Cardiac septum (tissue), 1 donor: ENCODE measurements at regions of chr1 and their contacts with region 1.

Region 1: DNA sequence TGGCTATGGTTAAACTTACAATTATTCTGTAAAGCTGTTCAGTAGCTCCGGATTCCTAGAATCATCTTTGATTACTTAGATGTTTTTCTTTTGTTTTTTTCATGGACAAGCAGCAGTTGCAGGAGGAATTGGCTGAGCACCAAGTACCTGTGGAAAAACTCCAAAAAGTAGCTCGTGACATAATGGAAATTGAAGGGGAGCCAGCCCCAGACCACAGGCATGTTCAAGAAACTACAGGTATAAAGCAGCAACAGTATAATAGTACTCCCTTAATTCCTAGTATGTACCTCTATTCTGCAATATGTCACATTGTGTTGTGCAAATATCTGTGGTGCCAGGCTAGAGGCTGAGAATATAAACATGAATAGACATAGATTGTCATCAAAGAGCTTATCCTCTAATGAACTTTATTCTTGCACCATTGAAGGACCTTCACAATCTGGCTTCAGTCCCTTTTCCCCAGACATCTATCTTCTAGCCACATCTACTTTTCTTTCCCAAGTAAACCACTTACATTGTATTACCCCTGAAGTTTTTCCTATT is 132.3 kb upstream of the BMP8A start:
- DNase-seq: no peak

Region 2: GRCh38 chr1:38990738-38991639 is 368.1 kb before region 1 on chr1 and contains the start of gene AKIRIN1:
- intact Hi-C with region 1: no loop called
- DNase-seq: peak; percentile 100
- total RNA-seq, gene AKIRIN1: 60.0 TPM

Region 3: DNA sequence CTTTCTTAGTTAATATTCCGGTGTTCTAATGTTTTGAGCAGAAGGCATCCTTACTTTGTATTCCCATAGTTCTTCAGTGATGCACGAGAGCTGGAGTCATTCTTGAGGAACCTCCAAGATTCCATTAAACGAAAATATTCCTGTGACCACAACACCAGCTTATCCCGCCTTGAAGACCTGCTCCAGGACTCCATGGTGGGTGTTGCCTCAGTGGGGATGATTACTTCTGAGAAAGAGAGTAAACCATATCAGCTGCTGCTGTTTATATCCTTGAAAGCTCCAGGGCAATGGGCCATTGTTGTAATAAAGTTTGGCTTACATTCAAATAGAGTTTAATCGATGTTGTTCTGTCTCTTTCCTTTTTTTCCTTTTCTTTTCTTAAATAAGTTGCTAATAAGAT is 61.5 kb before region 1 on chr1:
- intact Hi-C with region 1: loop called (anchors 5 kb)
- DNase-seq: no peak

Region 4: GRCh38 chr1:39737546-39738169 is 378.6 kb after region 1 on chr1:
- intact Hi-C with region 1: no loop called
- DNase-seq: no peak